Right ventricle myocardium inferior (tissue), 1 donor: ENCODE measurements at regions of chr19 and their contacts with region 1.

Region 1: DNA sequence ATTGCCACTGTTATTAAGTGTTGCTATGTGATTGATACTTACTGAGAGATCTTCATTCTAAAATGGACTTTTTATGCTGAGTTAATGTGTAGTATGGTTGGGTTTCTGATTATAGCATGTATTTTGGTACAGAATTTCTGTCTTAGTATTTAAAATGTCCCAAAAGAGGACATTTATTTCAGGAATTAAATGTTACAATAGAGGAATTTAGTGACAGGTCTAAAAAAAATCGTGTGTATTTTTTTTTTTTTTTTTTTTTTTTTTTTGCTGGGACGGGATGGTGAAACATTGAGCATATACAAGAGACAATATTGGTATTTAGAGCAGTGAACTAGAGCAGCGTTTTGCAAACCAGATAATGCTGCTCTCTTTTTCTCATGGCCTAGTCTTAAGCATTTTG is 27.9 kb downstream of the URI1 start:
- DNase-seq: no peak
- ATAC-seq: no peak

Region 2: GRCh38 chr19:29927944-29928625 is 41.8 kb before region 1 on chr19:
- intact Hi-C with region 1: no loop called
- DNase-seq: no peak
- ATAC-seq: no peak

Region 3: DNA sequence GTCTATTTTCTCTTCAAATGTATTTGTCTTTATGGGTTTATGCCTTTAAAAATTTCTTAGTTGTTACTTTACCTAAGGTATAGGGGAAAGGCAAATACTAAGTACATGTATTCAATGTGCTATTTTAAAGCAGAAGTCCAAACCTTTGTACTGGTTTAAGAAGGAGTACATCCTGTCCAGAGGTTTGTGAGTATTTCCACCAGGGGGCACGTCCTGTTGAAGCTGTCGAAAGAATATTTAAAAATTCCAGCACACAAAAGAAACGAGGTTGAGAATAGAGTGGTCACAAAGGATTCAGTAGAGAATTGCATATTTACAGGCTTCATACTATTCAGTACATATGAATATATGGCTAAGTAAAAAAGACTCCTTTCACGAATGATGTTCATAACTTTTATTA is 31.9 kb after region 1 on chr19:
- intact Hi-C with region 1: loop called (anchors 1 kb)
- DNase-seq: no peak
- ATAC-seq: no peak